Psoas muscle (tissue), 8 donors: ENCODE measurements at regions of chr1 and their contacts with region 1.

Region 1: DNA sequence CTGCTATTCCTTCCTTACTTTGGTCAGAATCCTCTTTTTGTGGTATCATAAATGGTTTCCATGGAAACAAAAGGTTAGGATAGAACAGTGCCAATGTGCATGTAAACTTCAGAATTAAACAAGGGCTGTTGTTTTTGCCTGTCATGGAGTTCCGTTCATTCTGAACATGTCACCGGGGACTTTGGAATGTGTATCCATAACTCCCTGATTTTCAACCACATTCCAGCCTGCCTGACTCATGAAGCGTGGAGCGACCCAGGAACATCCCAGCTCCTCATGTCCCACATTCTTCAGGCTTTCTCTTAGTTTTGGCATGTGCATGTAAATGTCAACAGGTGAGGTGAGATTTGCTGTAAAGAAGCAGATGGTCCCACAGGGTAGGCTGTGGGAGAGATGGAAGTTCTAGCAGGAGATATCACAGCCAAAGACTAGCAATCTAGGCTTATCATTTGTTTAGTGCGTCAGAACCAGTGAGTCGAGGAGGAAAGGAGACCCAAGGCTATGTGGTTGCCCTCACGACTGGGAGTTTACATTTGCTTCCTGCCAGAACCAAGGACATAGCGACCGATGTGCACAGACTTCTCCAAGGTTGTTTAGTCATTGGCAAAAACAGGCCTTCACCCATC is 23.0 kb upstream of the DNAJC11 start:
- DNase-seq: no peak
- ATAC-seq: no peak
- H3K4me3 ChIP-seq: no peak overlapping the region
- H3K27ac ChIP-seq: no peak overlapping the region
- H3K4me1 ChIP-seq: peaks cover 3% of the 10 kb centered on the region
- H3K27me3 ChIP-seq: no peaks in the 10 kb centered on the region
- CTCF ChIP-seq: no peak

Region 2: DNA sequence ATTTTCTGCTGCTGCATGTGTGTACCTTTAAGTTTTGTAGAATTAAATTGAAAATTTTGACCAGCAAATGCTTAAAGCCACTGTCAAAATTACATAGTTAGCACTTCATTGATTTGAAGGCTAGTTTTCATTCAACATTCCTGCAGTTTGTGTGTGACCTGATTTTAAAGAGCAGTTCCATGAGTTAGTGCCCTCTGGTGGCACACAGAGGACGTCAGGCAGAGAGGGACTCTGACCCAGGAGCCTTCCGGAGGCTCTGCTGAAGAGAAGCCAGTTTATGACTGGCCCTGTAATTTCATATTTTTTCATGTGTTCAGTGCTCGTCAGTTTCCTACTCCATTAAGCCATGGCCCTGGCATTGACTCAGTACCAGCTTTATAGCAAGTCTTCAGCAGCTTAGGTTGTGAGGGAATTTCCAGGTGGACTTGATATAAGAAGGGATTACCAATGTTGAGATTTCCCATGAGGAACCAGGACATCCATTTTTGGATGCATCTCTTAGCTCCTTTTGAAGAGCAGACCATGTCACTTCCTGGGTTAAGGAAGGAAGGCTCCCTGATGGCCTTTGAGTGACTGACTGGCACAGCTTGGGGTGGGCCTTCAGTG is 165.3 kb after region 1 on chr1:
- intact Hi-C with region 1: loop called (anchors 2 to 5 kb)
- DNase-seq: no peak
- ATAC-seq: peak; percentile 60 to 87 (median 70)
- H3K4me3 ChIP-seq: no peak overlapping the region
- H3K27ac ChIP-seq: no peak overlapping the region
- H3K4me1 ChIP-seq: no peaks in the 10 kb centered on the region
- H3K27me3 ChIP-seq: no peaks in the 10 kb centered on the region
- CTCF ChIP-seq: peak; percentile 80

Region 3: DNA sequence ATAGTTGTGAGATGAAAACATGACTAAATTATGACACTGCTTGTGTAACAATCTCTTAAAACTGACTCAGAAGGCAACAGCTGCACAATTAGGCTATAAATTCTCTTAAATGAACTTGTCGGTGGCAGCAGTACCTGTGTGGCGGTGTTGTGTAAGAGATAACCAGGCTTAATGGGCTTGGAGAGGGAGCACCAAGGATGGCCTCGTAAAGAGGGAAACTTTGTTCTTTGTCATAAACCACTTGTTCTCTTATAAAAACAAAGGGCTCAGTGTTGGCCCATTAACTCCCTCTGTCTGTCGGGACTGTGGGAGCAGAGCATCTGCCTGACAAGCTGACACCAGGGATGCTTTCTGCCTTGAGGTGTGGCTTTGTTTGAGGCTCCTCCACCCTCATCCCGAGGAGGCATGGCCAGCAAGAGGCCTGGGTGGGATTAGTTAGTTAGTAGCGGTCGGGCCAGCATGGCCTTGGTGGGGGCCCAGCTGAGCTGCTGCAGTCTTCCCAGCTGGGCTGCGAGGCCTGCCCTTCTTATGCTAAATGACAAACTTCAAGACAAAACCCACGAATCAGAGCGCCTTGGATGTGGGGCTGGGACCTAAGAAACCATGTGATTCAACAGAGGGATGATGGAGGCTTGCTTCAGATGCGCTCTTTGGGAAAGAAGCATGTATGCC is 232.0 kb after region 1 on chr1:
- intact Hi-C with region 1: no loop called
- DNase-seq: no peak
- ATAC-seq: no peak
- H3K4me3 ChIP-seq: no peak overlapping the region
- H3K27ac ChIP-seq: no peak overlapping the region
- H3K4me1 ChIP-seq: peaks cover 13% of the 10 kb centered on the region
- H3K27me3 ChIP-seq: no peaks in the 10 kb centered on the region
- CTCF ChIP-seq: no peak